Right cardiac atrium (tissue), 5 donors: ENCODE measurements at regions of chr17 and their contacts with region 1.

Region 1: DNA sequence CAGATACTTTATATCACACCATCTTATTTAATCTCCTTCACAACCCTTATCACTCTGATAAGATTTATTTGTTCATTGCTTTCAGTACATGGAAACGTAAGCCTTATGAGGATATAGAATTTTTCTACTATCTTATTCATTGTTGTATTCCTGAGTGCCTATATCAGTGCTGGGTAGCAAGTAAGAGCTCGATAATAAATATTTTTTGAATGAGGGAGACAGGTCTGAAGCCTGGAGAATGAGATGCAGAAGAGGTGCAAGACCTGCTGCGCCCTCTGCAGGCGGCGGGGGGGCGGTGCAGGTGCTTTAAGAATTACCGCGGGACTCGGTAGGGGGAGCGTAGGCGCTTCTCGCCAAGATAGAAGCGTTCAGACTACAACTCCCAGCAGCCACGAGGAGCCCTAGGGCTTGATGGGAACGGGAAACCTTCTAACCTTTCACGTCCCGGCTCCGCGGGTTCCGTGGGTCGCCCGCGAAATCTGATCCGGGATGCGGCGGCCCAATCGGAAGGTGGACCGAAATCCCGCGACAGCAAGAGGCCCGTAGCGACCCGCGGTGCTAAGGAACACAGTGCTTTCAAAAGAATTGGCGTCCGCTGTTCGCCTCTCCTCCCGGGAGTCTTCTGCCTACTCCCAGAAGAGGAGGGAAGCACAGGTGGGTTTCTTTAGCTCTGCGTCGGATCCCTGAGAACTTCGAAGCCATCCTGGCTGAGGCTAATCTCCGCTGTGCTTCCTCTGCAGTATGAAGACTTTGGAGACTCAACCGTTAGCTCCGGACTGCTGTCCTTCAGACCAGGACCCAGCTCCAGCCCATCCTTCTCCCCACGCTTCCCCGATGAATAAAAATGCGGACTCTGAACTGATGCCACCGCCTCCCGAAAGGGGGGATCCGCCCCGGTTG is at the start of gene WRAP53:
- DNase-seq: peak; percentile 97 to 99 (median 98)
- ATAC-seq: peak; percentile 95 to 97
- H3K4me3 ChIP-seq: peak within 1 kb of the TSS; percentile 100
- H3K27ac ChIP-seq: peak within 1 kb of the TSS; percentile 99
- H3K4me1 ChIP-seq: no peaks in the 10 kb centered on the region
- H3K27me3 ChIP-seq: no peaks in the 10 kb centered on the region
- total RNA-seq, gene WRAP53: 4.0 to 6.3 (median 4.9) TPM

Region 2: GRCh38 chr17:7583253-7584109 is 104.7 kb before region 1 on chr17 and contains the start of gene MPDU1:
- intact Hi-C with region 1: loop called in 1 of 4 experiments (anchors 10 kb)
- DNase-seq: peak; percentile 98 to 99 (median 99)
- ATAC-seq: peak; percentile 82 to 87
- H3K4me3 ChIP-seq: peak within 1 kb of the TSS; percentile 69
- H3K27ac ChIP-seq: peak within 1 kb of the TSS; percentile 88
- H3K4me1 ChIP-seq: peaks cover 19% of the 10 kb centered on the region
- H3K27me3 ChIP-seq: no peaks in the 10 kb centered on the region
- total RNA-seq, gene MPDU1: 19.3 to 32.7 (median 29.4) TPM

Region 3: DNA sequence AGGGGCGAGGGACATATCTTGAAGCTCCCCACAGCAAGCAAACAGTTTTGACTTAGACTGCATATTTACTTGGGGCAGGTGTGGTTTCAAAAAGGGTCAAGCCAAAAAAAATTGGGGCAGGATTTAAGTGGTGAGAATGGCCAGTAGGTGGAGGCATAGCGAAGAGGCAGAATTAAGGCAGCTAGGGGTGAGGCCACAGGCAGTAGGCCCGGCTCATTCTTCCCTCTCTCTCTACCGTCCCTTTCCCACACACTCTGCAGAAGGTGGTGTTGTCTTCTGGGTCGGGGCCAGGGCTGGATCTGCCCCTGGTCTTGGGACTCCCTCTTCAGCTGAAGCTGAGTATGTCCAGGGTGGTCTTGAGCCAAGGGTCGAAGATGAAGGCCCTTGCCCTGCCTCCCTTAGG is 55.7 kb before region 1 on chr17:
- intact Hi-C with region 1: loop called (anchors 5 to 10 kb)
- DNase-seq: peak in 1 of 3 donors; percentile 60
- ATAC-seq: no peak
- H3K4me3 ChIP-seq: no peak overlapping the region
- H3K27ac ChIP-seq: no peak overlapping the region
- H3K4me1 ChIP-seq: peaks cover 2% of the 10 kb centered on the region
- H3K27me3 ChIP-seq: no peaks in the 10 kb centered on the region